HepG2 (cell line): ENCODE measurements at regions of chr9 and their contacts with region 1.

Region 1: DNA sequence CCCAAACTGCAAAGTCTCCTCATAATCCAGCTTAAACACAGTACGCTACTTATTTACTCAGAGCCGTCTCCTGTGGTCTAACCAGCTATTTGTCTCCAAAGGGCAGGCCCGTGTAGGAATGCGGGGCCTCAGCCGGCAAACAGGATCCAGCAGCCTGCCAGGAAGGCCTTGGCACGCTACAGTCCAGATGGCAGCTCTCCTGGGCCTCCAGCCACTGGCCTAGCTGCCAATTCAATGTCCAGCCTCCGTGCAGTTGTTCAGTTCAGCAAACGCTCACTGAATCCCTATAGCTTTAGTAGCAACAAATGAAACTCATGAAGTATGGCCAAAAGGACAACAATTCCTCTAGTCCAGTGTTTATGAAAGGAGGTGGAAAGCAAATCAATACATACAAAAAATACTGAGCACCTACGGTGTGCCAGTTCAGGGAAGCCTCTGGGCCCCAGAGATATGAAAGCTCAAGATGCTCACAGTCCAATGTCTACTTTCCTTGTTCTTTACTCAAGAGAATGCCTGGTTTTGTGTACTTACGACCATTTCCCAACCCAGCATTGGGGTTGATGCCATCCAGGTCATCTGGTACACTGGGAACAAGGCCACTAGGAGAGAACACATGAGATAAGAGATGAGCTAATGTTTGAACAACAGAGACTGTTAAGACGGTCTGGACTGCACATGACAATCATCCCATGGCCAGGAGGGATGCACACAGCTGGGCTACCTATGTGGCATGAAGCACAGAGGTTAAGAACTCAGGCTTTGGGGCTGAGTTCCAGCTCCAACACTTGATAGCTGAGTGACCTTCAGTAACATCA is 8.3 kb downstream of the CDK5RAP2 start:
- DNase-seq: peak; percentile 99
- ATAC-seq: peak; percentile 93
- H3K4me3 ChIP-seq: peak overlapping the region in 2 of 3 experiments; percentile 11 to 43; a peak in 2 of 6 replicates
- H3K27ac ChIP-seq: peak overlapping the region; percentile 98
- H3K4me1 ChIP-seq: peaks cover 72% of the 10 kb centered on the region
- H3K27me3 ChIP-seq: no peaks in the 10 kb centered on the region
- CTCF ChIP-seq: 0 out of 2 replicates have a peak, but pooled peaks have one; percentile 7
- EP300 ChIP-seq: peak; percentile 93 to 98
- POLR2A ChIP-seq: peak; percentile 23 to 72; a peak in 2 of 4 replicates
- RAD21 ChIP-seq: peak; percentile 53; the same call in 1 of the 2 replicates

Region 2: DNA sequence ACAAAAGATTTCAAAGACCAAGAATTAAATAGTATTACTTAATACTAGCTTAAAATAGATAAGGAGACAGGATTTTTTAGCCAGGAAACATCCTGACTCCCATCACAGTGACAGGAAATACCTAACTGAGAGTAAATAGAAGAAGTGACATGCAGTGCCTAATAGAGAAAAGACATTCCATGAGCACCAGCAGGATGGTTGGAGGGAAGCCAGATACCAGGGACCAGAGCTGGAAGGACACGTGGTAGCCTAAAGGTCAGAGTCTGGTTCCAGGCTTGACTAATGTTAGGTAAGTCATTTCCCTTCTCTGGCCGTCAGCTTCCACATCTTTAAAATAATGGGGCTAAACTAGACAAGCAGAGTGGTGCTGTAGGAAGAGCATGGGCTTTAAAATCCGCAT is 33.3 kb before region 1 on chr9:
- CTCF ChIA-PET with region 1: no interaction called
- POLR2A ChIA-PET with region 1: interaction called, 10 read pairs
- in situ Hi-C with region 1: no loop called
- intact Hi-C with region 1: loop called (anchors 5 kb)
- DNase-seq: peak; percentile 95
- ATAC-seq: peak; percentile 96
- H3K4me3 ChIP-seq: no peak overlapping the region
- H3K27ac ChIP-seq: peak overlapping the region; percentile 37
- H3K4me1 ChIP-seq: peaks cover 30% of the 10 kb centered on the region
- H3K27me3 ChIP-seq: no peaks in the 10 kb centered on the region
- CTCF ChIP-seq: no peak
- EP300 ChIP-seq: no peak
- POLR2A ChIP-seq: no peak
- RAD21 ChIP-seq: no peak

Region 3: GRCh38 chr9:120559546-120559945 is 12.1 kb before region 1 on chr9:
- CTCF ChIA-PET with region 1: no interaction called
- POLR2A ChIA-PET with region 1: interaction called, 25 read pairs
- in situ Hi-C with region 1: no loop called
- intact Hi-C with region 1: no loop called
- DNase-seq: no peak
- ATAC-seq: no peak
- H3K4me3 ChIP-seq: no peak overlapping the region
- H3K27ac ChIP-seq: no peak overlapping the region
- H3K4me1 ChIP-seq: peaks cover 30% of the 10 kb centered on the region
- H3K27me3 ChIP-seq: no peaks in the 10 kb centered on the region
- CTCF ChIP-seq: no peak
- EP300 ChIP-seq: no peak
- POLR2A ChIP-seq: no peak
- RAD21 ChIP-seq: no peak

Region 4: DNA sequence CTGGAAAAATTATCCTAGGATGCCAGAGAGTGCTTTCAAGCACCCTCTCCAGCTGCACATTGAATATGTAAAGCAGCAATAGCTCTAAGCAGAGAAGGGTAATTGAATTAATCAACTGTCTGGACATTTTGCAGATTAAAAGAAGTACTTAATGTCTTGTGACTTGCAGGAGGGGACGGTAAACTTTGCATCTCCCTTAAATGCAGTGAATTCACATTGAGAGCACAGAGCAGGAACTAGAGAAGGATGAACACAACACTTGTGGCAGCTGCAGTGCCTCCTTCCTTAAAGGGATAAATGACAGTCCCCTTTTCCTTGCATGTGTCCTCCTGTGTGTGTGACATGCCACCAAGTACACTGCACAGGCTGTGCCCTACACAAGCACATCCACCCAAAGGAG is 15.7 kb after region 1 on chr9:
- CTCF ChIA-PET with region 1: no interaction called
- POLR2A ChIA-PET with region 1: interaction called, 10 read pairs
- in situ Hi-C with region 1: no loop called
- intact Hi-C with region 1: no loop called
- DNase-seq: no peak
- ATAC-seq: peak; percentile 43; the same call in 2 of the 3 replicates
- H3K4me3 ChIP-seq: no peak overlapping the region
- H3K27ac ChIP-seq: no peak overlapping the region
- H3K4me1 ChIP-seq: peaks cover 32% of the 10 kb centered on the region
- H3K27me3 ChIP-seq: no peaks in the 10 kb centered on the region
- CTCF ChIP-seq: no peak
- EP300 ChIP-seq: no peak
- POLR2A ChIP-seq: no peak
- RAD21 ChIP-seq: no peak

Region 5: GRCh38 chr9:120610975-120611689 is 39.5 kb after region 1 on chr9:
- CTCF ChIA-PET with region 1: no interaction called
- POLR2A ChIA-PET with region 1: interaction called, 3 read pairs
- in situ Hi-C with region 1: no loop called
- intact Hi-C with region 1: loop called (anchors 5 kb)
- DNase-seq: peak; percentile 29
- ATAC-seq: peak; percentile 68
- H3K4me3 ChIP-seq: no peak overlapping the region
- H3K27ac ChIP-seq: no peak overlapping the region
- H3K4me1 ChIP-seq: no peaks in the 10 kb centered on the region
- H3K27me3 ChIP-seq: no peaks in the 10 kb centered on the region
- CTCF ChIP-seq: peak; percentile 34
- EP300 ChIP-seq: no peak
- POLR2A ChIP-seq: no peak
- RAD21 ChIP-seq: peak; percentile 28; the same call in 1 of the 2 replicates